Adrenal gland (tissue), 19 donors: ENCODE measurements at regions of chr10 and their contacts with region 1.

Region 1: DNA sequence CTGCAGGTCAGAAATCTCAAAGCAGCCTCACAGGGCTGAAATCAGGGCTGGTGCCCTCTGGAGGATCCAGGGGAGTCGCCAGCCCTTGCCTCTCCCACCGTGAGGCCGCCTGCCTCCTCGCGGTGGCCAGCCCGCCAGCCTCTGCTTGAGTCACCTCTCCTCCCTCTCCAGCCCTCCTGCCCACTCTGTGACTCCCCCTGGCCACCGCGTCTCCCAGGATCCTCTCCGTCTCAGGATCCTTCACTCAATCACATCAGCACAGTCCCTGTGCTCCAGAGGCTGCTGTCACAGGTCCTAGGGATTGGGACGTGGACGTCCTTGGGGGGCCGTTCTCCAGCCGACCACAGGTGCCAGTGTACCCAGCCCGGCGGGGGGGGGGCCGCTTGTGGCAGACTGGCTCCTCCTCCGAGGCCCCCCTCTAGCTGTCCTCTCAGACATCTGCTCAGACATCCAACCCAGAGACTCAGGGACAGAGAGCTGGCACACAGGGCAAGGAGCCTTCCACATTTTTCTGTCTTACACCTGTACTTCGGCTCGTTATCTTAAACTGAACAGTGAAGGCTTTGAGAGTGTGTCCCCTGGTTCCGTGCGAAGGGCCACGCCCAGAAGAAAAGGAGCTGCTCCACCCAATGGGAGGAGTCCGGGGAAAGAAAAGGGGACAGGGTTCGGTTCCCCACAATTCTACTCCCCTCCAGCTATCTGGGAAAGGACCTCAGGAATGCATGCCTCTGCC is 9.4 kb upstream of the PPP2R2D start:
- DNase-seq: peak in 6 of 7 donors; percentile 75 to 85 (median 77)
- H3K4me3 ChIP-seq: peak overlapping the region in 1 of 4 donors; percentile 16
- H3K27ac ChIP-seq: peak overlapping the region in 3 of 5 donors; percentile 38 to 80 (median 49)
- H3K4me1 ChIP-seq: peaks cover 6 to 7% of the 10 kb centered on the region in 2 donors
- H3K27me3 ChIP-seq: no peaks in the 10 kb centered on the region
- CTCF ChIP-seq: peak in 5 of 6 experiments; percentile 14 to 37 (median 26)
- POLR2A ChIP-seq: peak in 1 of 2 donors; percentile 13

Region 2: GRCh38 chr10:131937836-131938235 is 46.5 kb after region 1 on chr10:
- intact Hi-C with region 1: loop called (anchors 5 to 10 kb)
- DNase-seq: no peak
- H3K4me3 ChIP-seq: no peak overlapping the region
- H3K27ac ChIP-seq: peak overlapping the region in 1 of 5 donors; percentile 4
- H3K4me1 ChIP-seq: peaks cover 0 to 9% of the 10 kb centered on the region in 2 donors
- H3K27me3 ChIP-seq: no peaks in the 10 kb centered on the region
- CTCF ChIP-seq: no peak
- POLR2A ChIP-seq: no peak